CD4-positive, alpha-beta T cell (primary cell): ENCODE measurements at regions of chr12 and their contacts with region 1.

Region 1: DNA sequence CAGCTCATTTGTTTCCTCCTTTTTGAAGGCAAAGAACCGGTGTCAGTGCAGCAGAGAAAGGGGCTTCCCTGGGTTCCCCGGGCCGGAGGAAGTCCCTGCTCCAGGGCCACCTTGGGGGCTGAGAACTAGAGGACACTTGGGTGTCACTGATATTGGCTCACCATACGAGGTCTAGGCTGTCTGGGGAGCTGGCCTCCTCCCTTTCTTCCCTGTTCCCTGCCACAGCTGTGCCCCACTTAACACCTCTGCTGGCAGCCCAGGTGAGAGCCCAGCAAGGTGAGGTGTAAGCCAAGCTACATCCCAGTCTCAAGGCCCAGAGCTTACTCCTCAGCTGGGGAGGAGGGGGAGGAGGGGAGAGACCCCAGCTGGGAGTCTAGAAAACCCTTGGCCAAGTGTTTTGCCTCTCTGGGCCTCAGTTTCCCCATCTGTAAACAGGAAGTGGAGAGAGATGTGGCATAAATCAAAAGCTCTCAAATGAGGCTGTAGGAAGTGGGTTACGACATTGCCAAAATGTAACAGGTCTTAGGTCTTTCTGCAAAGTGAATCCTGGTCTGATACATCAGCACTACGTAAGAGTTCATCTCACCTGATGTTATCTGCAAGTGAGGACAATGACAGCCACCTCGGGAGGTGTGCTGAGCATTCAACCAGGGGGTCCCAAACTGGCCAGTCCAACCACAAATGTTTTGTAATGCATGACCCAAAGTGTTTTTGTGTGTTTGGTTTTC is 25.5 kb downstream of the RASAL1 start:
- DNase-seq: peak in 1 of 14 experiments; percentile 19
- ATAC-seq: peak; percentile 41
- H3K4me3 ChIP-seq: no peak overlapping the region
- H3K4me3 Mint-ChIP-seq: no peak overlapping the region
- H3K27ac ChIP-seq: no peak overlapping the region
- H3K27ac Mint-ChIP-seq: peak overlapping the region; percentile 24
- H3K4me1 ChIP-seq: peaks cover 14% of the 10 kb centered on the region
- H3K4me1 Mint-ChIP-seq: peaks cover 11% of the 10 kb centered on the region
- H3K27me3 ChIP-seq: no peaks in the 10 kb centered on the region
- H3K27me3 Mint-ChIP-seq: no peaks in the 10 kb centered on the region
- CTCF ChIP-seq: no peak

Region 2: DNA sequence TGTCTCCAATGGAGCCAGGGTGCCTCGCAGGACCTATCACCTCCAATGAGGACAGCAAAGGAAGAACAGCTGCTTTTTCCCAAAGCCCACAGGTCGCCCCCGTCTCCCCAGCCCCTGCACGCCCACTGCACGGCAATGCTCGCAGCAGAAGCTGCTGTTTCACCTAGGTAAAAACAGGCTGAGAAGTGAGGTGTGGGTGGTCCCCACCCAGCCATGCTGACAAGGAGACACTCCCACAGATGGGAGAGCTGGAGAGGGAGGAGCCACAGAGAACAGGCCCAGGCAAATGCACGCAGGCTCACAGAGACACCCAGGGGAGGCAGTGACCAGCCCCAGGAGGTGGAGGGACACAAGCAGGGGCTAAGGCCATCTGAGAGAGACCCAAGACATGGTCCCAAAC is 49.9 kb after region 1 on chr12:
- CTCF ChIA-PET with region 1: no interaction called
- POLR2A ChIA-PET with region 1: no interaction called
- intact Hi-C with region 1: loop called in 1 of 2 experiments (anchors 2 kb)
- DNase-seq: peak in 1 of 14 experiments; percentile 6
- ATAC-seq: no peak
- H3K4me3 ChIP-seq: no peak overlapping the region
- H3K4me3 Mint-ChIP-seq: no peak overlapping the region
- H3K27ac ChIP-seq: no peak overlapping the region
- H3K27ac Mint-ChIP-seq: no peak overlapping the region
- H3K4me1 ChIP-seq: peaks cover 9% of the 10 kb centered on the region
- H3K4me1 Mint-ChIP-seq: peaks cover 6% of the 10 kb centered on the region
- H3K27me3 ChIP-seq: no peaks in the 10 kb centered on the region
- H3K27me3 Mint-ChIP-seq: no peaks in the 10 kb centered on the region
- CTCF ChIP-seq: no peak